Uterus (tissue), 4 donors: ENCODE measurements at regions of chr7 and their contacts with region 1.

Region 1: GRCh38 chr7:102279537-102280400 is 6.9 kb upstream of the SH2B2 start:
- DNase-seq: peak; percentile 45 to 47
- H3K4me3 ChIP-seq: no peak overlapping the region
- H3K27ac ChIP-seq: no peak overlapping the region
- H3K4me1 ChIP-seq: no peaks in the 10 kb centered on the region
- H3K27me3 ChIP-seq: no peaks in the 10 kb centered on the region
- CTCF ChIP-seq: peak; percentile 77 to 86 (median 82)
- POLR2A ChIP-seq: no peak

Region 2: GRCh38 chr7:101815835-101816493 is 463.8 kb before region 1 on chr7:
- intact Hi-C with region 1: no loop called
- DNase-seq: peak; percentile 72 to 74
- H3K4me3 ChIP-seq: peak overlapping the region; percentile 62 to 89
- H3K27ac ChIP-seq: peak overlapping the region; percentile 85 to 88
- H3K4me1 ChIP-seq: no peaks in the 10 kb centered on the region
- H3K27me3 ChIP-seq: no peaks in the 10 kb centered on the region
- CTCF ChIP-seq: peak in 2 of 4 experiments; percentile 10 to 42
- POLR2A ChIP-seq: peak in 1 of 2 donors; percentile 20

Region 3: GRCh38 chr7:102390697-102391484 is 111.1 kb after region 1 on chr7:
- intact Hi-C with region 1: loop called (anchors 2 kb)
- DNase-seq: peak; percentile 79 to 82
- H3K4me3 ChIP-seq: no peak overlapping the region
- H3K27ac ChIP-seq: no peak overlapping the region
- H3K4me1 ChIP-seq: no peaks in the 10 kb centered on the region
- H3K27me3 ChIP-seq: no peaks in the 10 kb centered on the region
- CTCF ChIP-seq: peak; percentile 85 to 93 (median 86)
- POLR2A ChIP-seq: no peak